H1 (cell line): ENCODE measurements at regions of chr1 and their contacts with region 1.

Region 1: GRCh38 chr1:226201029-226201593 is 14.6 kb upstream of the ACBD3 start:
- DNase-seq: no peak
- H3K4me3 ChIP-seq: no peak overlapping the region
- H3K27ac ChIP-seq: no peak overlapping the region
- H3K4me1 ChIP-seq: peaks cover 0 to 4% (median 2%) of the 10 kb centered on the region in 4 experiments; a peak in 3 of 7 replicates
- H3K27me3 ChIP-seq: no peaks in the 10 kb centered on the region; a peak in 1 of 7 replicates
- CTCF ChIP-seq: peak; percentile 42 to 66 (median 63)
- EP300 ChIP-seq: no peak
- POLR2A ChIP-seq: no peak
- RAD21 ChIP-seq: peak; percentile 71 to 80

Region 2: GRCh38 chr1:226166341-226166740 is 34.8 kb before region 1 on chr1:
- CTCF ChIA-PET with region 1: interaction called, 16 read pairs
- POLR2A ChIA-PET with region 1: no interaction called
- DNase-seq: no peak
- H3K4me3 ChIP-seq: no peak overlapping the region
- H3K27ac ChIP-seq: no peak overlapping the region
- H3K4me1 ChIP-seq: no peaks in the 10 kb centered on the region
- H3K27me3 ChIP-seq: no peaks in the 10 kb centered on the region
- CTCF ChIP-seq: no peak
- EP300 ChIP-seq: no peak
- POLR2A ChIP-seq: no peak
- RAD21 ChIP-seq: no peak

Region 3: DNA sequence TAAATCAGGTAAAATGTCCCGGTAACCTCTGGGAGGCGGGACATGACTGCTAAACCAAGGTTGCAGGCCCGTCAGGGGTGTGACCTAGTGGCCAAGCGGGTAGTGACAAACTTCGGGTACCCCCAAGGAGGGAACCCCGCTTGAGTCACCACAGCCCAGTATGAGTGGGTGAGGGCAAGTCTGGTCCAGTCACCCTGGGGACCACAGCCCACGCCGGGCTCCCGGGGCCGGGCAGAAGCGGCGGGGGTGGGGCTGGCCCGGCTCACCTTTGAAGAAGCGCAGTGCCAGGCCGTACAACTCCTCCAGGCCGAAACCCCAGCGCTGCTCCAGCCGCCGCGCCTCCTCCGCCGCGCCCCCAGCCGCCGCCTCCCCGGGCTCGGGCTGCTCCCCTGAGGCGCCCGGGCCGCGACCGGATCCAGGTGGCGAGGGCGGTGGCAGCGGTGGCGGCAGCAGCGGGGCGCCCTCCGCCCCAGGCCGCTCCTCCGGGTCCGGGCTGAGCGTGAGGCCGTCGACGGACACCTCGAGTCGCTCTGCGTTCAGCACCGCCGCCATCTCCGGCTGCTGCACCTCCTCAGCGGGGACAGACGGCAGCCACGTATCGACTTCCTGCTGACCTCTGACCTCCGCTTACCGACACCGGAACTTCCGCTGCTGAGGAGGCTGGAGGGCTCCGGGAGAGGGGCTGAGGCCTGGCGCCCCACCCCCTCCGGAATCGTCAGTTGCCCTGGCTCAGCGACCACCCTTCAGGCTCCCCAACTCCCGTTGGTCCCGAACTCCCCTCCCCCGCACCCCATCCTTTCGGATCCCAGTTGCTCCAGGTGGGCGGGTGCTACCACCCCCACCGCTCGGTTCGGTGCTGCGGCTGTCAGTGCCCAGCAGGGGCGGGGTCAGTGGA is 14.7 kb before region 1 on chr1 and contains the start of gene ACBD3:
- CTCF ChIA-PET with region 1: interaction called, 33 read pairs
- POLR2A ChIA-PET with region 1: interaction called, 4 read pairs
- DNase-seq: peak; percentile 64 to 90
- H3K4me3 ChIP-seq: peak within 1 kb of the TSS; percentile 65 to 90 (median 79)
- H3K27ac ChIP-seq: peak within 1 kb of the TSS; percentile 80; the same call in 1 of the 2 replicates
- H3K4me1 ChIP-seq: peaks cover 0 to 4% (median 3%) of the 10 kb centered on the region in 4 experiments; a peak in 3 of 7 replicates
- H3K27me3 ChIP-seq: no peaks in the 10 kb centered on the region
- CTCF ChIP-seq: no peak
- EP300 ChIP-seq: peak in 1 of 2 experiments; percentile 62; a peak in 1 of 3 replicates
- POLR2A ChIP-seq: peak; percentile 92 to 95
- RAD21 ChIP-seq: peak in 1 of 2 experiments; percentile 23; a peak in 1 of 4 replicates
- total RNA-seq, gene ACBD3: 28.2 and 29.4 TPM in 2 replicates

Region 4: GRCh38 chr1:226217273-226217672 is 16.2 kb after region 1 on chr1:
- CTCF ChIA-PET with region 1: interaction called, 103 read pairs
- POLR2A ChIA-PET with region 1: interaction called, 7 read pairs
- DNase-seq: no peak
- H3K4me3 ChIP-seq: no peak overlapping the region
- H3K27ac ChIP-seq: no peak overlapping the region
- H3K4me1 ChIP-seq: peaks cover 0 to 11% (median 4%) of the 10 kb centered on the region in 4 experiments; a peak in 3 of 7 replicates
- H3K27me3 ChIP-seq: peaks cover 0 to 2% (median under 1%) of the 10 kb centered on the region in 4 experiments; a peak in 2 of 7 replicates
- CTCF ChIP-seq: no peak
- EP300 ChIP-seq: no peak
- POLR2A ChIP-seq: no peak
- RAD21 ChIP-seq: no peak

Region 5: GRCh38 chr1:226223786-226224244 is 22.7 kb after region 1 on chr1:
- CTCF ChIA-PET with region 1: interaction called, 103 read pairs
- POLR2A ChIA-PET with region 1: interaction called, 4 read pairs
- DNase-seq: peak in 1 of 2 experiments; percentile 82
- H3K4me3 ChIP-seq: peak overlapping the region; percentile 34 to 69 (median 60)
- H3K27ac ChIP-seq: no peak overlapping the region
- H3K4me1 ChIP-seq: peaks cover 0 to 7% (median 0%) of the 10 kb centered on the region in 4 experiments; a peak in 3 of 7 replicates
- H3K27me3 ChIP-seq: peaks cover 0 to 23% (median 18%) of the 10 kb centered on the region in 4 experiments; a peak in 6 of 7 replicates
- CTCF ChIP-seq: peak; percentile 23 to 41 (median 34); a peak in 3 of 4 replicates
- EP300 ChIP-seq: no peak
- POLR2A ChIP-seq: no peak
- RAD21 ChIP-seq: peak in 1 of 2 experiments; percentile 0; a peak in 1 of 4 replicates

Region 6: DNA sequence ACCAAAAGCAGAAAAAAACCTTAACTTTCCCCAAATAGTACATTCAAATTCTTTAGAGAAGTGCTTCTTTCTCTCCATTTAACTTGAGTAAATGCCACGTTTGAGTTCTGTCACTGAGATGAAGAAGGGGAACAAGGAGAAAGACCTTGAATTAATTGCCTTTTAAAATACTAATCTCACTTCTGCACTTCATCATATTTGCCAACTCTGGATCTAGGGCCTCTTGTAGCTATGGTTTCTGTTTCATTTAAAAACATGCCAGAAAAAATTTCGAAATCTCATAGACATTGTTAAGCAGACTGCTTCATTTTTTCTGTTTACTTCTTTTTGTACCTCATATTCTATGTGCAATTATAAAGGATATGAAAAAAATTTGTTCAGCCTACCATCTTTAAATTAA is 47.0 kb after region 1 on chr1:
- CTCF ChIA-PET with region 1: no interaction called
- POLR2A ChIA-PET with region 1: no interaction called
- DNase-seq: no peak
- H3K4me3 ChIP-seq: no peak overlapping the region
- H3K27ac ChIP-seq: no peak overlapping the region
- H3K4me1 ChIP-seq: no peaks in the 10 kb centered on the region
- H3K27me3 ChIP-seq: no peaks in the 10 kb centered on the region
- CTCF ChIP-seq: no peak
- EP300 ChIP-seq: no peak
- POLR2A ChIP-seq: no peak
- RAD21 ChIP-seq: no peak